Posterior vena cava (tissue), 2 donors: ENCODE measurements at regions of chr12 and their contacts with region 1.

Region 1: GRCh38 chr12:113532292-113532691 is 60.6 kb upstream of the LHX5 start:
- DNase-seq: no peak

Region 2: DNA sequence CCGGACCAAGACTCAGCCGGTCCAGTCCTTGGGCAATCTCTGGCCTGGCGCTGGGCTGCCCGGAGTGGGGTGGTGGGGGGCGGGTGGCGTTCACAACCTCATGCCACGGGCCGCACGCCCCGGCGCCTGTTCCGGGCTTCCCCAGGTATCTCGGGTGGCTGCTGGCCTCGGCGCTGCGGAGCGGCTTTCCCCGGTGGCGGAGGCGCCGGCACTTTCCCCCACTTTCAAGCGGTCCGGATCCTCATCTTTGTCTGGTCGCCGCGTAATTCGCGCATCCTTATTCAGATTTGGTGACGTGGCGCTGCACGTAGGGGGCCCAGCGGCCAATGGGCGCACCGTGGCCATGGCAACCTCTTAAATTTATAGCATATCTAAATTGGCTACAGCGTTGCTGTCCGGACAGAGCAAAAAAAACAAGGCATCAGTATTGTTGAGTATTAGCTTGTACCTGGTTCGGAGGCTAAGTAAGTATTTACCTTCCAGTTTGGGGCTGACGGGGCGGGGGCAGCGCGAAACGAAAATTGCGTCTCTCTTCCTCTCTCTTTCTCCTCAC is 60.6 kb before region 1 on chr12 and contains the start of gene LHX5:
- intact Hi-C with region 1: loop called in 1 of 2 experiments (anchors 2 kb)
- DNase-seq: no peak
- total RNA-seq, gene LHX5: not detected

Region 3: GRCh38 chr12:114512345-114512744 is 980.1 kb after region 1 on chr12:
- intact Hi-C with region 1: no loop called
- DNase-seq: no peak